Common myeloid progenitor, CD34-positive (primary cell): ENCODE measurements at regions of chr5 and their contacts with region 1.

Region 1: GRCh38 chr5:76402886-76403765 is at the start of gene IQGAP2:
- DNase-seq: peak; percentile 97 to 99 (median 98)
- H3K4me3 ChIP-seq: peak within 1 kb of the TSS; percentile 70 to 99 (median 96)
- H3K27ac ChIP-seq: peak within 1 kb of the TSS; percentile 93 to 97
- H3K4me1 ChIP-seq: peaks cover 32 to 63% (median 52%) of the 10 kb centered on the region in 4 experiments
- H3K27me3 ChIP-seq: no peaks in the 10 kb centered on the region

Region 2: DNA sequence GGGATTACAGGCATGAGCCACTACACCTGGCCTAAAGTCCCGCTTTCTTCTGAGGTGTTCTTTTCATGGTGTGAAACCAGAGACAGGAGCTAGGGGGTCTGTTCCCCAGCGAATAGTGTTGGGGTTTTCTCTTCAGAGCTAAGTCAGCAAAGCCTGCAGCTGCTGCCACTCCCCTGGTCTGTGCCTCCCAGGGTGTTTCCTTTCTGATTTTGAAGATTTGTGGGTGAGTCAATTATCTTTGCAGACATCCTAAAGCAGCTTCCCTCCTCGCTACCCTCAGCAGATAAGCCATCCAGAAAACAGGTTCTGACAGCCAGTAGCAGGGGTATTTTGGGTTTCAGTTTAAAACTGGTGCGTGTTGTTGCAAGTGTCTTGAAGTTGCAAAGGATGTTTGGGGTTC is 72.0 kb before region 1 on chr5:
- CTCF ChIA-PET with region 1: interaction called, 14 read pairs
- POLR2A ChIA-PET with region 1: interaction called, 6 read pairs
- DNase-seq: peak; percentile 80 to 97 (median 95)
- H3K4me3 ChIP-seq: peak overlapping the region in 3 of 7 experiments; percentile 1 to 54 (median 40)
- H3K27ac ChIP-seq: peak overlapping the region; percentile 36 to 46
- H3K4me1 ChIP-seq: peaks cover 35 to 80% (median 73%) of the 10 kb centered on the region in 4 experiments
- H3K27me3 ChIP-seq: no peaks in the 10 kb centered on the region

Region 3: GRCh38 chr5:76386360-76386759 is 16.8 kb before region 1 on chr5:
- CTCF ChIA-PET with region 1: interaction called, 27 read pairs
- POLR2A ChIA-PET with region 1: interaction called, 10 read pairs
- DNase-seq: no peak
- H3K4me3 ChIP-seq: no peak overlapping the region
- H3K27ac ChIP-seq: no peak overlapping the region
- H3K4me1 ChIP-seq: peaks cover 10 to 66% (median 50%) of the 10 kb centered on the region in 4 experiments
- H3K27me3 ChIP-seq: no peaks in the 10 kb centered on the region

Region 4: DNA sequence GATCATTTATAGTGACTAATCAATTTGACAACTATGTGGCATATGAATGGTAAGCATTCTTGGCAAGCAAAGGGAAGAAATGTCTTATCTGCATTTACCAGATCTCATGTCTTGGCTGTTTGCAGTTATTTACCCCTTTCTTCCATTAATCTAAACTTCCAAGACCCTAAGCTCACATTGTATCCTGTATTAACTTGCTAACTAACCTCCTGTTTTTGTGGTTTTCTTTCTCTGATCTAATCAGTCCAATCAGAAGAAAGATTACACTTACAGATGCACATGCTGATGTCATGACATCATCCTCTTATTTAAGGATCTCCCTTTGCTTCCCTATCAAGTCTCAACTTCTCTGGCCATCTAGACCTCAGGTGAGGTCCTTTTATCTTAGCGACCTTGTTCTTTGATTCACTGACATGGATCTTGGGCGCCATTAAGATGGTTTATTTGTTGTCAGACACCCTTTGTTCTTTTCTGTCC is 124.6 kb after region 1 on chr5:
- CTCF ChIA-PET with region 1: interaction called, 7 read pairs
- POLR2A ChIA-PET with region 1: interaction called, 14 read pairs
- DNase-seq: peak; percentile 79 to 95 (median 90)
- H3K4me3 ChIP-seq: peak overlapping the region in 1 of 7 experiments; percentile 46
- H3K27ac ChIP-seq: peak overlapping the region; percentile 74 to 84
- H3K4me1 ChIP-seq: peaks cover 44 to 88% (median 64%) of the 10 kb centered on the region in 4 experiments
- H3K27me3 ChIP-seq: no peaks in the 10 kb centered on the region

Region 5: GRCh38 chr5:76544268-76544926 is 141.3 kb after region 1 on chr5:
- CTCF ChIA-PET with region 1: interaction called, 77 read pairs
- POLR2A ChIA-PET with region 1: interaction called, 57 read pairs
- DNase-seq: peak; percentile 83 to 88 (median 88)
- H3K4me3 ChIP-seq: peak overlapping the region in 5 of 7 experiments; percentile 11 to 62 (median 51)
- H3K27ac ChIP-seq: peak overlapping the region; percentile 90 to 93
- H3K4me1 ChIP-seq: peaks cover 53 to 100% (median 89%) of the 10 kb centered on the region in 4 experiments
- H3K27me3 ChIP-seq: no peaks in the 10 kb centered on the region

Region 6: GRCh38 chr5:76571559-76571958 is 168.4 kb after region 1 on chr5:
- CTCF ChIA-PET with region 1: interaction called, 11 read pairs
- POLR2A ChIA-PET with region 1: interaction called, 3 read pairs
- DNase-seq: peak in 2 of 3 donors; percentile 49 to 55
- H3K4me3 ChIP-seq: no peak overlapping the region
- H3K27ac ChIP-seq: no peak overlapping the region
- H3K4me1 ChIP-seq: peaks cover 0 to 10% (median 3%) of the 10 kb centered on the region in 4 experiments
- H3K27me3 ChIP-seq: no peaks in the 10 kb centered on the region

Region 7: DNA sequence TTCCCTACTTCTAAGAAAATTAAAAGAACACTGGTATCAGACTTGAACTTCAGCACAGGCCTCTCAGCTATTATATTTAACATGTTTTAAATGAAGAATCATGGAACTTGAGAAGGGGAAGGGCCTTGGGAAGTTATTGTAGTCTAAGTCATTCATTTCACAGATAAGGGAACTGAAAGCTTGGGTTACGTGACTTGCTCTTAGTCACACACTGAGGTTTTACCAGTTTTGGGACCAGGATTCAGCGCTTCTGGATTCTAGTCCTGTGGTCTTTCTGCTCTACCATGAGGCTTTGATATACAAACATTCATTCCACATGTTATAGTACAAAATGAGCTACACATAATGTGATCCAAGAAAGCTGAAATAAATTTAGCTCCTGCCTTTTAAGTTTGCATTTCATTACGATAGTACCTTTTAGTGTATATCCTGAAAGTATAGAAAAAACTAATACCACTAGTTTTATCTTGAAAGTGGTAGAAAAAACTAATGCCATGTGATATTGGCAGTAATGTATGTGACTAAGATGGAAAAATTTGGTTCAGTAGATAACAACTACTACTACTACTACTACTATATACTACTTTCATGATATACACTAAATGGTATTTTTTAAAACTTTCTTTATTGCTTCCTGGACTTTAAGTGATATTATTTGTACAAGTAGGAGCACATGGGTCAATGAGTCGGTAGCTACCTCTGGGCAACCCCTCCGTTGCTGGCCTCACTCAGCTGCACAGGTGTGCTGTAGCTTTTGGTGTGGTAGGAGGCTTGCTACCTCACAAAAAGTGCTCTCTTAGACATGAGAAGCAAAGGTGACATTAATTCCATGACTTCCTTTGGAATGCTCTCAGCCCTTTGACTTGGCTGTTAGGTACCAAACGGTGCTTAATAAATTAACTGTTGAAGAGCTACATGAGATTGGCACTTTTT is 179.4 kb after region 1 on chr5:
- CTCF ChIA-PET with region 1: interaction called, 61 read pairs
- POLR2A ChIA-PET with region 1: interaction called, 5 read pairs
- DNase-seq: peak; percentile 65 to 89 (median 86)
- H3K4me3 ChIP-seq: peak overlapping the region in 1 of 7 experiments; percentile 24
- H3K27ac ChIP-seq: peak overlapping the region; percentile 0 to 57
- H3K4me1 ChIP-seq: peaks cover 8 to 33% (median 25%) of the 10 kb centered on the region in 4 experiments
- H3K27me3 ChIP-seq: no peaks in the 10 kb centered on the region